WTC11 (cell line): ENCODE measurements at regions of chr7 and their contacts with region 1.

Region 1: DNA sequence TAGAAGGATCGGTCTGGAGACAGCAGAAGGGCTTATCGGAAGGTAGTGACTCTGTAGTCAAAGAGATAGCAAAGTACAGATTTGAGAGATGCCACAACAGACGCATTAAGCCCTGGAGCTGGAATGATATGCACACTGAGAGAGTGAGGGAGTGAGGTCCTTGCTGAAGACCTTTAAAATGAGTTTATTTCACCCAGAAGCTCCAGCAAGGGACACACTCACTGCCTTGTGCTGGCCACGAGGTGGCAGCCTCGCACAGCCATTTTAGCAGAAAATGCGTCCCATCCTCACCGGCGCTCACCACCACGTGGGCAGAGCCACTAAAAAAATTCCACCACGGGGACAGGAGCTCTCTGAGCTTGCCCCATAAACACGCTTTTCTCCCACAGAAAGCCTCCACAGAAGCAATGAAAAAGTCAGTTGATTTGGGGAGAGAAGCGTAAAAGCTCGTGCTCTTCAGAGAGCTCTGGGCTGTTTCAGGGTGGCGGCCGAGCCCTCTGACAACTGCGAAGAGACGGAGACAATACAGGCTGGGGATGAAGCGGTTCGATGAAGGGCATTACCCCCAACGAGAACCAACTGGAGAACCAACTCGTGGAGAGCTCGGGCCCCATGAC is 163.0 kb upstream of the KLF14 start:
- DNase-seq: peak; percentile 75
- ATAC-seq: peak; percentile 76
- H3K4me3 Mint-ChIP-seq: no peak overlapping the region
- H3K27ac Mint-ChIP-seq: peak overlapping the region; percentile 81
- H3K4me1 Mint-ChIP-seq: peaks cover 56% of the 10 kb centered on the region
- H3K27me3 Mint-ChIP-seq: no peaks in the 10 kb centered on the region
- CTCF ChIP-seq: peak; percentile 70

Region 2: DNA sequence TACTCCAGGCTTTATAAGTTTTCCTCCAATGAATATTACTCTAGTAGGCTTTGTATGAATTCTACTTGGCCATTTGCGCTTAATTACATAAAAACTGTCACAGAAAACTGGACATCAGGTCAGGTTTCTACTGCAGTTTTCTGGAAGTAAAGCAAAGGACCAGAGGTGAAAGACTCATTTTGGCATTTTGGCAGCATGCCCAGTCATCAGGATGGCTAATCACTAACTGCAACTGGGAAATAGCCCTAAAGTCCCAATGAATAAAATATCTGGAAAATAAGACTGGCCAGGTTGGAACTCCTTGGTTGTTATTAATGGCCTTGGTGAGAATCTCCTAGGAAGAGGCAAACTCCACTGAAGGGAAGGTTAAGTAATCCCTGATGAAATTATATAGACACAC is 304.0 kb before region 1 on chr7:
- CTCF ChIA-PET with region 1: no interaction called
- POLR2A ChIA-PET with region 1: no interaction called
- DNase-seq: no peak
- ATAC-seq: no peak
- H3K4me3 Mint-ChIP-seq: no peak overlapping the region
- H3K27ac Mint-ChIP-seq: no peak overlapping the region
- H3K4me1 Mint-ChIP-seq: no peaks in the 10 kb centered on the region
- H3K27me3 Mint-ChIP-seq: no peaks in the 10 kb centered on the region
- CTCF ChIP-seq: no peak

Region 3: GRCh38 chr7:130758429-130759056 is 138.5 kb before region 1 on chr7:
- CTCF ChIA-PET with region 1: no interaction called
- POLR2A ChIA-PET with region 1: no interaction called
- DNase-seq: no peak
- ATAC-seq: no peak
- H3K4me3 Mint-ChIP-seq: no peak overlapping the region
- H3K27ac Mint-ChIP-seq: no peak overlapping the region
- H3K4me1 Mint-ChIP-seq: no peaks in the 10 kb centered on the region
- H3K27me3 Mint-ChIP-seq: no peaks in the 10 kb centered on the region
- CTCF ChIP-seq: peak; percentile 42; the same call in 1 of the 2 replicates

Region 4: GRCh38 chr7:130875265-130875741 is 21.7 kb before region 1 on chr7:
- CTCF ChIA-PET with region 1: interaction called, 129 read pairs
- POLR2A ChIA-PET with region 1: no interaction called
- DNase-seq: peak; percentile 88
- ATAC-seq: peak; percentile 88
- H3K4me3 Mint-ChIP-seq: no peak overlapping the region
- H3K27ac Mint-ChIP-seq: no peak overlapping the region; the same call in 1 of the 2 replicates
- H3K4me1 Mint-ChIP-seq: peaks cover 38% of the 10 kb centered on the region
- H3K27me3 Mint-ChIP-seq: no peaks in the 10 kb centered on the region; the same call in 1 of the 2 replicates
- CTCF ChIP-seq: peak; percentile 95

Region 5: GRCh38 chr7:130929896-130930659 is 33.1 kb after region 1 on chr7:
- CTCF ChIA-PET with region 1: interaction called, 19 read pairs
- POLR2A ChIA-PET with region 1: no interaction called
- DNase-seq: no peak
- ATAC-seq: no peak
- H3K4me3 Mint-ChIP-seq: no peak overlapping the region
- H3K27ac Mint-ChIP-seq: no peak overlapping the region
- H3K4me1 Mint-ChIP-seq: peaks cover 10% of the 10 kb centered on the region
- H3K27me3 Mint-ChIP-seq: no peaks in the 10 kb centered on the region
- CTCF ChIP-seq: no peak

Region 6: GRCh38 chr7:130956417-130957136 is 59.6 kb after region 1 on chr7:
- CTCF ChIA-PET with region 1: interaction called, 27 read pairs
- POLR2A ChIA-PET with region 1: no interaction called
- DNase-seq: no peak
- ATAC-seq: no peak
- H3K4me3 Mint-ChIP-seq: no peak overlapping the region
- H3K27ac Mint-ChIP-seq: peak overlapping the region; percentile 6; the same call in 1 of the 2 replicates
- H3K4me1 Mint-ChIP-seq: peaks cover 27% of the 10 kb centered on the region
- H3K27me3 Mint-ChIP-seq: no peaks in the 10 kb centered on the region
- CTCF ChIP-seq: no peak

Region 7: GRCh38 chr7:130994378-130995115 is 97.5 kb after region 1 on chr7:
- CTCF ChIA-PET with region 1: interaction called, 14 read pairs
- POLR2A ChIA-PET with region 1: no interaction called
- DNase-seq: no peak
- ATAC-seq: peak; percentile 75
- H3K4me3 Mint-ChIP-seq: no peak overlapping the region
- H3K27ac Mint-ChIP-seq: peak overlapping the region; percentile 71
- H3K4me1 Mint-ChIP-seq: peaks cover 15% of the 10 kb centered on the region
- H3K27me3 Mint-ChIP-seq: no peaks in the 10 kb centered on the region
- CTCF ChIP-seq: no peak

Region 8: GRCh38 chr7:131027287-131027773 is 130.3 kb after region 1 on chr7:
- CTCF ChIA-PET with region 1: interaction called, 10 read pairs
- POLR2A ChIA-PET with region 1: no interaction called
- DNase-seq: peak; percentile 35
- ATAC-seq: peak; percentile 57
- H3K4me3 Mint-ChIP-seq: no peak overlapping the region
- H3K27ac Mint-ChIP-seq: peak overlapping the region; percentile 46; the same call in 1 of the 2 replicates
- H3K4me1 Mint-ChIP-seq: peaks cover 11% of the 10 kb centered on the region
- H3K27me3 Mint-ChIP-seq: no peaks in the 10 kb centered on the region
- CTCF ChIP-seq: no peak

Region 9: DNA sequence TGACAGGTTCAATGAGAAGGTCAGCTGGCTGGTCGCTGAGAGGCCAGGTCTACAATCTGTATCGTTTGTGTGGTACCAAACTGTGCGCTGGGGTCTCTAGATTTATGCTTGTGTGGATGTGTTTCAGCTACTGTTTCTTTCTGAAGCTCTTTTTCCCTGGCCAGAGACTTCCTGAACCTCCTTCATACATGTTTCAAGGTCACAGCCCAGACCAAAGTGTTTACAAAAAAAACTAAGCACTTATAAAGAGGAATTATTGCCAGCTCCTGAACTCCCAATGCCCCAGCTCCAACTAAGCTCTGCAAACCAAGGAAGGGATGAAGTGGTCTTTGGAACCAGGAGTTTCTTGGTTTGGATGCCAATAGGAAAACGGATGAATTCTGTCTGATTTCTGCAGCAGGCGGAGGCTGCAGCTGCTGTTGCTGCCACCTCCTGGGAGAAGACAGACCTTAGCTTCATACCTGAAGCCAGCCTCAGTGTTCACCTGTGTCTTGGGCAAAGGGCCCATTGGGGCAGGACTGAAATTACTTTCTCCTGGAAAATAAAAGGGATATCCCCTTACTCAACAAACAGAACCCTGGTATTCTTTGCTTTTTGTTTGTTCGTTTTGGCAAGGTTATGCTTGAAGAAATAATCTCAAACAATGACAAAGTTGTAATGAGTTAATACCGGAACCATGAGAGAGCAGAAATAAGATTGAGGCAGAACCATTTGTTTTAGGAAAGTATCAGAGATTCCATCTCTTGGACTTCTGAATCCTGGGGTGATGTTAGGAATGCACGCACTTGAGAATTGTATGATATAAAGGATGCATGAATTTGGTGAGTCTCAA is 406.1 kb after region 1 on chr7:
- CTCF ChIA-PET with region 1: interaction called, 31 read pairs
- POLR2A ChIA-PET with region 1: no interaction called
- DNase-seq: peak; percentile 48
- ATAC-seq: peak; percentile 85
- H3K4me3 Mint-ChIP-seq: no peak overlapping the region
- H3K27ac Mint-ChIP-seq: no peak overlapping the region
- H3K4me1 Mint-ChIP-seq: peaks cover 36% of the 10 kb centered on the region
- H3K27me3 Mint-ChIP-seq: peaks cover 8% of the 10 kb centered on the region
- CTCF ChIP-seq: no peak